ENCODE measurements at regions of chr17 and their contacts with region 1.

Region 1: GRCh38 chr17:49556223-49556971 is 19.3 kb upstream of the NXPH3 start:
- DNase-seq: peak; percentile 76
- H3K4me3 Mint-ChIP-seq: no peak overlapping the region
- H3K27ac Mint-ChIP-seq: no peak overlapping the region
- H3K4me1 Mint-ChIP-seq: peaks cover 3% of the 10 kb centered on the region
- H3K27me3 Mint-ChIP-seq: peaks cover 16% of the 10 kb centered on the region

Region 2: DNA sequence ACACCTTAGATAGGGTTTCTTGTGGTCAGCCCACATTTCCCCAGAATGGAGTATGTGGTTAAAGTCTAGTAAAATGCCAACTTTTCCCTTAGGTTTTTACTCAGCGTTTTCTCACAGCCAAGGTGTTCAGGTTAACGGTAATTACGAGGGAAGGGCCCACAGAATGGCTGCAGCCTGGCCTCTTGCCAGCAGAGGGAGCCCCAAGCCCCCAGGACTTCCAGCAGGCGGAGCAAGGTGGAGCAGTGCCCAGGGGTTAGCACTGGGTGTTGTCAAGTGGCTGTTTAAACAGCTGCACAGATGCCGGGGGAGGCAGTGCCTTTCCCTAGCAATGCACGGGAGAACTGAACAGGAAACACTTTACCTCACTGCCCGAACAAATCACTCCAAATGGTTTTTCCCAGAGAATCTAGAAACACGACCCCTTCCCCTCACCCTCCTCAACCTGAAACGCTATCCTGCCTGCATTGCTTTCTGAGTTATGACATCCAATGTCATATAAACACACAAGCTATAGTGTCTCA is 148.4 kb before region 1 on chr17:
- intact Hi-C with region 1: loop called (anchors 2 kb)
- DNase-seq: peak; percentile 73
- H3K4me3 Mint-ChIP-seq: no peak overlapping the region
- H3K27ac Mint-ChIP-seq: no peak overlapping the region
- H3K4me1 Mint-ChIP-seq: peaks cover 18% of the 10 kb centered on the region
- H3K27me3 Mint-ChIP-seq: no peaks in the 10 kb centered on the region

Region 3: DNA sequence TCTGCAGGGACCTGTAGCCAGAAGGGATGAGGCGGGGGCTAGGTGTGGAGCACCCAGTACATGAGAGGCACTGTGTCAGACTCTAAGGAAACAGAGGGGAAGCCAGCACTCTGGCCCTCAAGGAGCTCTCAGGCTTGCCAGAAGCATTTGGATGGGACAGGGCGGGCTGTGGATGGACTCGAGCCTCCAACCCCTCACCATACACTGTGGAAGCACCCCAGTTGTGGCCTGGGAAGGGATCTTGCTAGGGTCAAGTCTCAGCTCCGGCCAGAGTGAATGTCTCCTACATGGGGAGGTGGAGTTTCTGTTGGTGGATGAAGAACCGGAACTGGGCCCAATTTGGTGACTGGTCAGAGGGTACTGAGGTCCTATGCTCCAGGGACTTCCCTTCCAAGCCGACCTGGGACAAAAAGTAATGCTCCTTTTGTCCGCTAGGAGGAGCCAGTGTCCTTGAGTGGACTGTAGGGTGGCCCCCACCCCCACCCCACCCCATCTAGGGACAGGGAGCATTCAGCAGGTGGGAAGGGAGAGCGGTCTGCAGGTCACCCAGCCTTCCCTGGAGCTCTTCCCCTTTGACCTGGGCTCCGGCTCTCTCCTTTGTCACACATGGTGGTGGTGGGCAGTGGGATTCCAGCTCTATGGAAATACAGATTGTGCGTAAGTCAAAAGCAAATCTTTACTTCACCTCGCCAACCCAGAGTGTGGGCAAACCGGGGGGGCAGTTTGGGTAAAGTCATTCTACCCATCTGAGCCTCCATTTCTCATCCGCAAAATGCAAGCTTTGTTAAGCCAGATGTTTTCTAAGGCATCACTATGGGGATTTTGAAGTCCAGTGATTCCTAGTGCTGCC is 121.4 kb before region 1 on chr17:
- intact Hi-C with region 1: loop called (anchors 1 kb)
- DNase-seq: peak; percentile 17
- H3K4me3 Mint-ChIP-seq: no peak overlapping the region
- H3K27ac Mint-ChIP-seq: no peak overlapping the region
- H3K4me1 Mint-ChIP-seq: no peaks in the 10 kb centered on the region
- H3K27me3 Mint-ChIP-seq: peaks cover 36% of the 10 kb centered on the region

Region 4: DNA sequence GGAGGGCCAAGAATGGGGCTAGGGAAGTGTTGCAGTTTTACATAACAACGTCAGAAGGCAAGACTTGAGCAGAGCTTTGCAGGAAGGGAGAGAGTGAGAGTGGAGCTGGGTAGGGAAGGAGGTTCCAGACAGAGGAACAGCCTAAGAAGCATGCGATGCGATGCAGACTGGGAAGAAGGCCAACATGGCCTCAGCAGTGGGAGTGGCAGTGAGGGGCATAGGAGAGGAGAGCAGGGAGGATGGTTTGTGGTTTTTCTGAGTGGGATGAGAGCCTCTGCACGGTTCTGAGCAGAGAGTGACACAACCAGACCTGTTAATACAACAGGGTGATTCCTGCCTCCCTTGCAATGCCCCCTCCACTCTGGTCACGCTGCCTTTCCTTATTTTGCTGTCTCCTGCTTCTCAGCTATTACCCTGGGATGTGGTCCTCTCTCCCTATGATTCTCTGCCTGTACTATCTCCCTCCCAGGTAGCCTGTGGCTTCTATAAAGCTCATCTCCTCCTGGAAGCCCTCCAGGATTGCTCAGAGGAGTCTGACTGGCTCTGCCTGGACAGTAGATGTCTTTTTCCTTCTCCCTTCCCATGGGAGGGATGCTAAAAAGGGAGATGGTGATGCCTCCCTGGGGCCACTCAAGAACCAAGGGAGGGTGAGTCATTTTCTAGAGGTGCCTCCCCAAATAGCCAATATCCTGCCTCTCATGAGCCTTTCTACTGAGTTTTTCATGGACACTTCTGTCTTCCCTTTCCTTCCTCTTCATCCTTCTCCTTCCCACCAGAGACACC is 100.0 kb before region 1 on chr17:
- intact Hi-C with region 1: no loop called
- DNase-seq: no peak
- H3K4me3 Mint-ChIP-seq: no peak overlapping the region
- H3K27ac Mint-ChIP-seq: no peak overlapping the region
- H3K4me1 Mint-ChIP-seq: peaks cover 2% of the 10 kb centered on the region
- H3K27me3 Mint-ChIP-seq: peaks cover 34% of the 10 kb centered on the region

Region 5: DNA sequence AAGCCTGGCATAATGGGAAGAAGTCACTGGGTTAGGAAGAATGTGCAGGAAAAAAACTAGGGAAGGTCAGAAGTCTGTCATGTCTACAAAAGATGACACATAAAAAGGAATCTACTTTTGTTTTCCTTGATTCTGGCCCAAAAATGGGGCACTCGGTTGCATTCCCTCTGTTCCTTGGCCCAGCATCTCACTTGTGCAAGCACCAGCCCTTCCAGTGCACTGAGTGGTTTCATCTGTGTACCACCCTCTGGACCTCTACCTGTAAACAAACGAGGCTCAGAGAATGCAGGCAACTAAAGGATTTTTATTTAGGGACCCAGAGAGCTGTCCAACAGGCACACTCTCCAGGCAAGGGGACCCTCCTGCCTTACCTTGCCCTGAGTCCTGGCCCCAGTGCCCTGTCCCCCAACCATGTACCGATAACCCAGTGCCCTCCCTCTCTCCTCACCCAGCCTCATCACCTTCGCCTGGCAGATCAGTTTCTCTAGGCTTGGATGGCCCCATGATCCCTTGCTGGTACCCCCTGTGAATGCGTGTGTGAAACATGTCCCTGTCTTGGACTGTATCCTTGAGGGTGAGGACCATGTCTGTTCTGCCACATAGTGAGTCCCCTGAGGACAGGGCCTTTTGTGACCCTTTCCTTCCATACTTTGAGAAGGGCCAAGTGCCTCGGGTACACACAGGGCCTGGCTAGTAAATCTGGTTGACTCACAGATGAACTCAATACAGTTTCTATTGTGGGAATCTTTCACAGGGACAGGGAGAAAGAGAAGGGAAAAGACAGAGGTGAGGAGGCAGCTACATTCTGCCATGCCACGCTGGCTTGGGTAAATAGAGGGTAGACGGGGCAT is 32.6 kb after region 1 on chr17:
- intact Hi-C with region 1: no loop called
- DNase-seq: no peak
- H3K4me3 Mint-ChIP-seq: no peak overlapping the region
- H3K27ac Mint-ChIP-seq: no peak overlapping the region
- H3K4me1 Mint-ChIP-seq: no peaks in the 10 kb centered on the region
- H3K27me3 Mint-ChIP-seq: no peaks in the 10 kb centered on the region

Region 6: DNA sequence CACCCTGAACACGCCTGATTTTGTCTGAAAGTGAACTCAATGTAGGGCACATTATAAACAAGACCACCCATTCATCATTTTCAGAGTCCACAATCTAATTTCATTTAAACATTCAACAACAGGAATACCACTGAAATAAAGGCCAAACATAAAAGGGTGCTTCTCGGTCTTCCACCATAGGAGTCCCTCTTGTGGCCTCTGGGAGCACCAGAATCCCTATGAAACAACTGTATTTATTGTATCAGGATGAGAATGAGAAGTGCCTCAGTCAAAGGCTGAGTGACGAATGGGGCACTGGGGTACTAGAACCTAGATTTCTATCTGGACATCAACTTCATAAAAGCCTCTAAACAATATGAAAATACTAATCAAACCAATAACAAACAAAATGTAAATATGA is 59.7 kb after region 1 on chr17:
- intact Hi-C with region 1: no loop called
- DNase-seq: no peak
- H3K4me3 Mint-ChIP-seq: no peak overlapping the region
- H3K27ac Mint-ChIP-seq: no peak overlapping the region
- H3K4me1 Mint-ChIP-seq: peaks cover 21% of the 10 kb centered on the region
- H3K27me3 Mint-ChIP-seq: no peaks in the 10 kb centered on the region

Measured in activated T-helper 2 cell treated with anti-CD3 and anti-CD28 coated beads, Interferon-gamma antibody, Interleukin-2, Interleukin-4, amounts not matched to agents 10 μg/mL and 5 μg/mL and 100 μg/mL, durations not matched to agents 14 hours and 24 hours and 36 hours (primary cell).